ENCODE measurements at regions of chr11 and their contacts with region 1.

Region 1: DNA sequence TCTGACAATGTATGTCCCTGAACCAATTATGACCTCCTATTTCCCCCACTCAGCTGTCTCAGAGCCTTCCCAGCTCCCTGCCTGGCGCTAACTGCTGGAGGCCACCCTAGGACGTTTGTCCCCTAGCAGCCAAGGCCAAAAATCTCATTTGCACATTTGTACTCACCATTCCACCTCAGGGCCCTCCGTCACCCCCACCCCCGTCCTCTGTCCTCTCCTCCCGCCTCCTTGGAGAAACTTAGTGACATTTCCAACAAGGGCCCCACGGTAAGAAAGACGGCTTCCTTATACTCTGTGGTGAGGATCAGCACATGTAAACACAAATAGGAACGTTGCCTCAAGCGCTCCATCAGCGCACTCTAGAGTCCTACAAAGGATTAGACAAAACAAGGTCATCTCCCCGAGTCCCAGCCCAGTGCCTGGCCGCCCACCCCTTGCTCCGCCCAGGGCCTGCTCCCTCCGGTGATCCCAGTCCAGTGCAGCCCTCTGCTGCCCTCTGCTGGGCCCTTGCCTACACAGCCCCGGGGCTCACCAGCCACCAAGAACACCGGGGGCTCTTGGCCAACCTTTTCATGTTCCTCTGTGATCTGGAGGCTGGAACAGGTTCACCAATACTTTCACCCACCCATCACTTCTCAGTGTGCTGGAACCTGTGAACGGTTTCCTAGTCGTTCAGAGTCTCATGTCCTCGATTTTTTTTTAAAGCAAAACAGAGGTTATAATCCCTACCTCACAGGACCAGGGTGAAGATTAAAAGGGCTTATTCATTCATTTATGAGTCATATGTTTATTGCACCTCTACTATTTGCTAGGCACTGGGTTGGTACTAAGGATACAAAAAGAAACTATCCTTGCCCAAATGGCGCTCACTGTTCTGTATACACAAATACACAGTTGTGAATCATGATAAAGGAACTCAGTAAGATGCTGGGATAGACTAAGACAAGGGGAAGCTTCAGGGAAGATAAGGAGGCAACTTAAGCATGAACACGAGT is 15.3 kb upstream of the CTR9 start:
- DNase-seq: peak; percentile 96
- H3K4me3 ChIP-seq: no peak overlapping the region
- H3K27ac ChIP-seq: peak overlapping the region; percentile 74 to 78
- H3K4me1 ChIP-seq: no peaks in the 10 kb centered on the region
- H3K27me3 ChIP-seq: no peaks in the 10 kb centered on the region
- CTCF ChIP-seq: peak; percentile 97 to 100 (median 100)
- POLR2A ChIP-seq: peak in 1 of 2 donors; percentile 41

Region 2: GRCh38 chr11:10405855-10406592 is 329.8 kb before region 1 on chr11:
- intact Hi-C with region 1: loop called (anchors 10 kb)
- DNase-seq: peak; percentile 62 to 84
- H3K4me3 ChIP-seq: no peak overlapping the region
- H3K27ac ChIP-seq: no peak overlapping the region
- H3K4me1 ChIP-seq: no peaks in the 10 kb centered on the region
- H3K27me3 ChIP-seq: no peaks in the 10 kb centered on the region
- CTCF ChIP-seq: peak; percentile 77 to 91 (median 84)
- POLR2A ChIP-seq: no peak

Region 3: GRCh38 chr11:10426475-10426874 is 309.3 kb before region 1 on chr11:
- intact Hi-C with region 1: no loop called
- DNase-seq: no peak
- H3K4me3 ChIP-seq: no peak overlapping the region
- H3K27ac ChIP-seq: no peak overlapping the region
- H3K4me1 ChIP-seq: no peaks in the 10 kb centered on the region
- H3K27me3 ChIP-seq: no peaks in the 10 kb centered on the region
- CTCF ChIP-seq: no peak
- POLR2A ChIP-seq: no peak

Region 4: GRCh38 chr11:10514210-10514609 is 221.6 kb before region 1 on chr11:
- intact Hi-C with region 1: loop called (anchors 10 kb)
- DNase-seq: no peak
- H3K4me3 ChIP-seq: no peak overlapping the region
- H3K27ac ChIP-seq: no peak overlapping the region
- H3K4me1 ChIP-seq: no peaks in the 10 kb centered on the region
- H3K27me3 ChIP-seq: no peaks in the 10 kb centered on the region
- CTCF ChIP-seq: peak; percentile 19 to 40 (median 26)
- POLR2A ChIP-seq: no peak

Region 5: GRCh38 chr11:10990637-10991193 is 254.9 kb after region 1 on chr11:
- intact Hi-C with region 1: no loop called
- DNase-seq: no peak
- H3K4me3 ChIP-seq: no peak overlapping the region
- H3K27ac ChIP-seq: no peak overlapping the region
- H3K4me1 ChIP-seq: no peaks in the 10 kb centered on the region
- H3K27me3 ChIP-seq: no peaks in the 10 kb centered on the region
- CTCF ChIP-seq: no peak
- POLR2A ChIP-seq: no peak

Measured in uterus (tissue), 4 donors.